Activated CD8-positive, alpha-beta T cell treated with anti-CD3 and anti-CD28 coated beads for 36 hours (primary cell): ENCODE measurements at regions of chr10 and their contacts with region 1.

Region 1: DNA sequence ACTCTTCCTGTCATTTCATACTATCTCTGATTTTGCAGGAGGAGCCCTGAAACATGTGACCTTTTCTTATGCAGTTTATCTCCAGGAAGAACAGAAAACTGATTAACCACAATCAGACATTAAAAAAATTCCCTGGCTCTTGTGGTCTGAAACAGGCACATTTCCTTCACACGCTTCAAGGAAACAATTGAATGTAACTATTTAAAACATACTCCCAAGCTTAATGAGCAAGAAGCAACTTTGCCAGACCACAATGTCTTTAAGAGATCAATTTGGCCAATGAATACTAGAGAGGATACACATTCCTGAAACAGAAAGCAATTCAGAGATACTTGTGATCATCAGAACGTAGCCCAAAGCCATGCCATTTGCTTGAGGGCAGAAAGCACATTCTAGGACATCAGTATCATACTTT is 65.8 kb downstream of the PIP4K2A start:
- DNase-seq: no peak
- ATAC-seq: no peak
- H3K4me3 Mint-ChIP-seq: peak overlapping the region; percentile 69
- H3K27ac Mint-ChIP-seq: peak overlapping the region; percentile 99
- H3K4me1 Mint-ChIP-seq: peaks cover 90% of the 10 kb centered on the region
- H3K27me3 Mint-ChIP-seq: no peaks in the 10 kb centered on the region
- CTCF ChIP-seq: no peak

Region 2: GRCh38 chr10:22573820-22574569 is 74.6 kb before region 1 on chr10:
- CTCF ChIA-PET with region 1: interaction called, 14 read pairs
- POLR2A ChIA-PET with region 1: no interaction called
- intact Hi-C with region 1: no loop called
- DNase-seq: peak; percentile 56
- ATAC-seq: peak; percentile 35
- H3K4me3 Mint-ChIP-seq: peak overlapping the region; percentile 42
- H3K27ac Mint-ChIP-seq: peak overlapping the region; percentile 86
- H3K4me1 Mint-ChIP-seq: peaks cover 66% of the 10 kb centered on the region
- H3K27me3 Mint-ChIP-seq: no peaks in the 10 kb centered on the region
- CTCF ChIP-seq: peak; percentile 68

Region 3: DNA sequence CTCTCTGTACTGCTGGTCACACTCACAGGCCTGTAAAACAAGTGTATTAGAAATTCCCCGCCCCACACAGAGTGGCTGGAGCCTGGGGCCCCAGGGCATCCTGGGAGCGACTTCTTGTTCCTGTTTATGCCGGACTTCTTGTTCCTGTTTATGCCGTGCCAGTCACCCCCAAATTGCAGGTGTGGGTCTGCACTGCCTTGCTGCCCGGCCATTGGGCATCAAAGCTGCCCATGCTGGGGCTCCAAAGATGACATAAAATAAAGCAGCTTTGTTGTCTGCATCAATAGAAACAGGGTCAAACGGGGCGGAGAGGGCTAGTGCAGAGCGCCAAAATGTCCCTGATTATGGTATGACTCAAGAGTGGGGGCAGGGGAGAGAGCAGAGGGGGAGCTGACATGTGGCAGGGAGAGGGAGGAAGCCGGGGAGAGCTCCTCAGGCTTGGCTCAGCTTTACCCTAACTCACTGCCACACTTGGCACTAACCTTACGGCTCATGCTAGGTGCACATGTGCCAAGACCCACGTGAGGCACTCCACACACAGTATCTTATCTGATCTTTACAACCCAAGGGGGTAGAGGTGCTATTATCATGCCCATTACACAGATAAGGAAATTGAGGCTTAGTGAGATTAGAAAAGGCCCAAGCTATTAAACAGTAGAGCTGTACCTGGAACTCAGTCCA is 32.6 kb before region 1 on chr10:
- CTCF ChIA-PET with region 1: interaction called, 3 read pairs
- POLR2A ChIA-PET with region 1: interaction called, 19 read pairs
- intact Hi-C with region 1: loop called (anchors 5 kb)
- DNase-seq: peak; percentile 62
- ATAC-seq: peak; percentile 43
- H3K4me3 Mint-ChIP-seq: peak overlapping the region; percentile 69
- H3K27ac Mint-ChIP-seq: peak overlapping the region; percentile 91
- H3K4me1 Mint-ChIP-seq: peaks cover 96% of the 10 kb centered on the region
- H3K27me3 Mint-ChIP-seq: no peaks in the 10 kb centered on the region
- CTCF ChIP-seq: no peak

Region 4: DNA sequence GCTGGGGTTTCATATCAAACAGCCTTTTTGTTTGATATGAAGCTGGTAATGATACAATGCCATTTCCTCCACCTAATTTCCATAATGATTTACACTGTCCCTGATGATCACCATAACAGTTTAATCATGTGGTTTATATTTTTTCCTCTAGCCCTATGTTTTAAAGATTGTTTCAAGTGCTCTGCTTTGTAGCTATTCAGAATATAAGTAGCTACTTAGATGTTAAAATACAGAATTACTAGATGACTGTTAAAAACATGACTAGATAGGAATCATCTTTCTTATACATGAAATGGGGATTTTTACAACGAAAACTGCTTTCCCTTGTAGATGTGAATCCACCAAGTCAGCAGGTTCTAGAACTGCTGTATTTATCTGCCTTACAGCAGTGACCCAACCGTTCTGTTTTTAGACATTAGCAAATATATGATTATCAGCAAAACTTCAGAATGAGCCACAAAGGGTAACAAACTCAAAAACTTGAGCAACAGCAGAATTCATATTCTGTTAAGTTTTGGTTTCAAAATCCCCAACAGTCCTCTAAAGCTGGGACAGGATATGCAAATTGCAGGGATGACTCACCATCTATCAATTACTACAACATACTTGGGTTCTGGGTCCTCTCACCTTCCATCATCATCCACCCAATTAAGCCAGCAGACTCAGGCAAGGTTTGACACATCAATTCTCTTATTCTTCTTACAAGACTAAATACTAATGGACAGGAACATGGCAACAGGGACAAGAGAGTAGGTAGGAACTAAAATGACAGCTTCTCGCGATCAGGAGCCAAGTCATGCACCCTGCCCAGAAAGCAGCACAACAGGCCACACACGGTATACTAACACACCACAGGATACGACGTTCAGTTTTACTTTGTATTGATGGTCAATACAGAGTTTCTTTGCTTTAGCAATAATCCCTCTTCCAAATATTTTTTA is 18.1 kb before region 1 on chr10:
- CTCF ChIA-PET with region 1: interaction called, 32 read pairs
- POLR2A ChIA-PET with region 1: interaction called, 48 read pairs
- intact Hi-C with region 1: loop called (anchors 1 kb)
- DNase-seq: peak; percentile 64
- ATAC-seq: peak; percentile 76
- H3K4me3 Mint-ChIP-seq: peak overlapping the region; percentile 67
- H3K27ac Mint-ChIP-seq: peak overlapping the region; percentile 95
- H3K4me1 Mint-ChIP-seq: peaks cover 90% of the 10 kb centered on the region
- H3K27me3 Mint-ChIP-seq: no peaks in the 10 kb centered on the region
- CTCF ChIP-seq: no peak

Region 5: DNA sequence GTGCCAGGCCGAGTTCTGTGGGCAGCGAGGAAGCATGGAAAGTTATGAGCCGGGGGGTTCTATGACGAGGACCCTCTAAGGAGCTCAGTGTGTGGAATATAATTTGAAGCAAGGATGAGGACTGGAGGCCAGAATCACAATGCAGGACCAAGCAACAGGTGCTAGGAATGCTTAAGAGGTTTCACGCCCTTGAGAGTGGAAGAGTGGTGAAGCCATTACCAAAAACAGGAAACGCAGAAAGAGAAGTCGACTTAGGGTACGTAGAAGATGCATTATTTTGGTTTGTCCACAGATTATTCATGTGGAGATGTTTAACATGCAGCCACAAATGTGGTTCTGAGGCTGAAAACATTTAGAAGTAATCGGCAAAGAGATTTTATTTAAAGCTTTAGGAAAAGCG is 12.9 kb before region 1 on chr10:
- CTCF ChIA-PET with region 1: interaction called, 32 read pairs
- POLR2A ChIA-PET with region 1: interaction called, 48 read pairs
- intact Hi-C with region 1: loop called (anchors 1 kb)
- DNase-seq: no peak
- ATAC-seq: no peak
- H3K4me3 Mint-ChIP-seq: peak overlapping the region; percentile 12
- H3K27ac Mint-ChIP-seq: peak overlapping the region; percentile 90
- H3K4me1 Mint-ChIP-seq: peaks cover 88% of the 10 kb centered on the region
- H3K27me3 Mint-ChIP-seq: no peaks in the 10 kb centered on the region
- CTCF ChIP-seq: no peak

Region 6: DNA sequence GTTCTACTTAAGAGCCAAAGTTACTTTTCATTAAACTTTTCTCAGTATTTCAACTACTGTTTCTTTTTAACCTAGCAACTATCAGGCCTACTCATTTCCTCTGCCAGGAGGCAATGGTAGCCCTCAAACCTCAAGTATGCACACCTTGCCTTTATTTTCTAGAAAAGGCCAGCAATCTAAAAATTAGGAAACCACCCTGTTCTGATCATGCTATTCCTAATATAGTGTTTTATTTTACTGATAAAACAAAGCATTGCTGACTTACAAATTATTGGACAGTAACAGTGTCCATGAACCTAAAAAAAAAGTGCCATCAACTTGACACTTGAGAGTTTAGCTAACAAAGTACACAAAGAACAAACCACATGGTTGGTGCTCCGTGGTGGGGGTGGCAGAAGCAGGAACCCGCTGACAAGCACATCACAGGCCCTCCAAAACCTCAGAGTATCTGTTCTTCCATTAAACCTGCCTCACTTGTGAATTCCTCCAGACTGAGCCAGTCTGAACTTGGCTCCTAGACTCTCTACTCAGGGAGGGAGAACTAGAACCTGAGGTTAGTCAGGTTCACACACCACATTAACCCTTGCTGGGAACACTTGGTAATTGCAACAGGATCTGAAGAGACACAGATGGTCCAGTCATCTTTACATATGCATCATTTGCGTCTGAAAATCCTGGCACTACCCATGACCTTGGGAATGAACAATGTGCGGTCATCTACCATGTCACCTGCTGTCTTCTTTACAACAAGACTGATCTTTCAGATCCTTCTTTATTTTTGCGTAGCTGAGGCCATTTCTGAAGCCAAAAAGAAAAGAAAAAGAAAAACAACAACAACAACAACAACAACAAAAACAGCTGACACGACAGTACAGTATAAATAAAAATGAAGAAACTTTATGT is 33.9 kb after region 1 on chr10:
- CTCF ChIA-PET with region 1: interaction called, 22 read pairs
- POLR2A ChIA-PET with region 1: interaction called, 35 read pairs
- intact Hi-C with region 1: loop called (anchors 5 kb)
- DNase-seq: peak; percentile 85
- ATAC-seq: peak; percentile 42
- H3K4me3 Mint-ChIP-seq: peak overlapping the region; percentile 59
- H3K27ac Mint-ChIP-seq: peak overlapping the region; percentile 100
- H3K4me1 Mint-ChIP-seq: peaks cover 88% of the 10 kb centered on the region
- H3K27me3 Mint-ChIP-seq: no peaks in the 10 kb centered on the region
- CTCF ChIP-seq: no peak